ENCODE measurements at regions of chr9 and their contacts with region 1.

Region 1: GRCh38 chr9:2461892-2462291 is 159.7 kb upstream of the VLDLR start:
- DNase-seq: no peak
- H3K4me3 ChIP-seq: no peak overlapping the region
- H3K4me3 Mint-ChIP-seq: no peak overlapping the region
- H3K27ac Mint-ChIP-seq: no peak overlapping the region
- H3K4me1 ChIP-seq: peaks cover 13% of the 10 kb centered on the region
- H3K4me1 Mint-ChIP-seq: peaks cover 4% of the 10 kb centered on the region
- H3K27me3 ChIP-seq: no peaks in the 10 kb centered on the region
- H3K27me3 Mint-ChIP-seq: no peaks in the 10 kb centered on the region
- CTCF ChIP-seq: no peak

Region 2: DNA sequence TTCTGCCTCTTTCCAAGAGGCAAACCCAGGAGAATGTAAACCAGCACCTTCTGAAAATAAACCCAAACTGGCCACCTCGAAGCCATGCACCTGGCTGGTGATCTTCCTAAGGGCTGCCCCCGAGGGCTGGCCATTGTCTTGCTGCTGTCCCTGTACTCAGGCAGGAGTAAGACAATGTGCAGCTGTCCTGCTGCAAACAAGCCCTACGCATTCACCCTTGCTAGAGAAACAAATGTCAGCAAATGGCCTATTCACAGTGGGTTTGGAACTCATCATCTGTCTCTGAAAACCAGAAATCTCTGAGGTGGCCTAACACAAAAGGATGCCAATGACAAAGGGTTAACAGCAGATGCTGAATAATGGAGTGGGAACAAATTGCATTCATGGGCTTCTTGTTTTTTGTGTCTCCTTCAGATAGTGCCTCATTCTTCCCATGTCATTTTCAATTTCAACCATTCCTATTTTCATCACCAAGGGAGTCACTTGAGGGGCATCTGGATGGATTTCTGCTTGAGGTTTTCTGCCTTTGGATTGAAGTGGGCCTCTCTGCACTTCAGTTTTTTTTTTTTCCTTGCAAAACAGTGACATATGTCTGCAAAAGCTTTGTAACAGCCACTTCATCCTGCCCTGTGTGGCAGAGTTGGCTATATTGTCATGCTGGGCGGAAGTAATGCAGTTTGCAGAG is 101.9 kb before region 1 on chr9:
- CTCF ChIA-PET with region 1: no interaction called
- POLR2A ChIA-PET with region 1: no interaction called
- intact Hi-C with region 1: no loop called
- DNase-seq: no peak
- H3K4me3 ChIP-seq: no peak overlapping the region
- H3K4me3 Mint-ChIP-seq: no peak overlapping the region
- H3K27ac Mint-ChIP-seq: no peak overlapping the region
- H3K4me1 ChIP-seq: no peaks in the 10 kb centered on the region
- H3K4me1 Mint-ChIP-seq: no peaks in the 10 kb centered on the region
- H3K27me3 ChIP-seq: no peaks in the 10 kb centered on the region
- H3K27me3 Mint-ChIP-seq: no peaks in the 10 kb centered on the region
- CTCF ChIP-seq: no peak

Region 3: DNA sequence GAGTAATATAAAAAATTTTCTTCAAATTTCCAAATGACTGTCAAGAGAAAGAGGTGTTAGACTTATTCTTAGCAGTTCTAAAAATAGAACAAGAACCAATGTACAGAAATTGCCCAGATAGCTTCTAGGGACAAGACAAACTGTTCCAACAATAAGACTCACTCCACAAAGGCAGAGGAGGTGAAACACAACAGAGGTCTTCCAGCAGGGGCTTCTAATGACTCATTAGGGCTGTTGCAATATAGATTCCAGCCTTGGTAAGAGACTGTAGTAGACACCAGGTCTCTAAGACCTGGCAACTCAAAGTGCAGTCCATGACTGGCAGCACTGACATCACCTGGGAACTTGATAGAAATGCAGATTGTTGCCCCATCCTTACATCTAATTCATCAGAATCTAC is 25.1 kb after region 1 on chr9:
- CTCF ChIA-PET with region 1: no interaction called
- POLR2A ChIA-PET with region 1: no interaction called
- intact Hi-C with region 1: no loop called
- DNase-seq: no peak
- H3K4me3 ChIP-seq: no peak overlapping the region
- H3K4me3 Mint-ChIP-seq: no peak overlapping the region
- H3K27ac Mint-ChIP-seq: no peak overlapping the region
- H3K4me1 ChIP-seq: 0 out of 2 replicates have a peak, but pooled peaks cover 6% of the 10 kb centered on the region
- H3K4me1 Mint-ChIP-seq: no peaks in the 10 kb centered on the region
- H3K27me3 ChIP-seq: no peaks in the 10 kb centered on the region
- H3K27me3 Mint-ChIP-seq: no peaks in the 10 kb centered on the region
- CTCF ChIP-seq: no peak

Region 4: GRCh38 chr9:3099646-3100045 is 637.8 kb after region 1 on chr9:
- CTCF ChIA-PET with region 1: no interaction called
- POLR2A ChIA-PET with region 1: no interaction called
- intact Hi-C with region 1: no loop called
- DNase-seq: no peak
- H3K4me3 ChIP-seq: no peak overlapping the region
- H3K4me3 Mint-ChIP-seq: no peak overlapping the region
- H3K27ac Mint-ChIP-seq: no peak overlapping the region
- H3K4me1 ChIP-seq: no peaks in the 10 kb centered on the region
- H3K4me1 Mint-ChIP-seq: no peaks in the 10 kb centered on the region
- H3K27me3 ChIP-seq: no peaks in the 10 kb centered on the region
- H3K27me3 Mint-ChIP-seq: peaks cover 3% of the 10 kb centered on the region
- CTCF ChIP-seq: no peak

Region 5: DNA sequence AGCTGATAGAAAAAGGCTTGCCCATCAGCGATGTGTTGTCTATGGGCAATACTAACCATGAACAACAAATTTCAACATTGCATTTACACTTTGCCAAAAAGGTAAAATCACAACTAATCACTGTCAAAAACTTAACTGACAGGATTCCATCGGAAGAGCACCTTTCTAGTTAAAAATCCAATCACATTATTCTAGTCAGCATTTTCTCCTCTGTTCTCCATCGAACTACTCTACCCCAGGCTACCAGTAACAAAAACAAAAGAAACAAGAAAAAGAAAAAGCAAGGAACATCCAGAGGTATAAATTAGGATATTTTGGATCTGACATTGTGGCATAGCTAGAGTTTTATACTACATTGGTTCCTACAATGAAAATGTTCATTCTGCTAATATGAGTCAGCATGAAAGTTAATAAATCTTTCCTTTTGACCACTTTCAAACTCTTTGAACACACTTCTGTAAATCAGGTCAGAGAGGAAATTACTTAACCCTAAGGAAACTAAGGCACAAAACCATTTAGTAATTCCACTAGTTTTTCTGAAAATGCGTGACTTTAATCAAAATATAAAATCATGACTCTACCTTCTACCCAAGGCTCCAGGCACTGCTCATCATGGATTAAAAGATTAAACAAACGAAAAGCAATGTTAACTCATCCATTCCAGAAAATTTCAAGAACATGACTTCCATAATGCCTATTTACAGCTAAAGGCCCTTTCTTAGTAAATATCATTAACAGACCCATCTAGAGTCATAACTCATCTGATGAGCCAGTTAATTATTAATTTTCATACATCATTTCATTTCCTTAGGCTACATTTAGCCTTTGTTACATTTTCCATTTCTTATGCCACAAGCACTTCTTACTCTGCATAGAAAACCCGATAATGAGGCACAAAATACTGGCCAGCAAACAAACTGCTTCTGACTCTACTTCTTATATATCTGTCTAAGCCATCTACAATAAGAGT is 1827.8 kb after region 1 on chr9:
- CTCF ChIA-PET with region 1: no interaction called
- POLR2A ChIA-PET with region 1: no interaction called
- intact Hi-C with region 1: loop called (anchors 5 kb)
- DNase-seq: no peak
- H3K4me3 ChIP-seq: no peak overlapping the region
- H3K4me3 Mint-ChIP-seq: no peak overlapping the region
- H3K27ac Mint-ChIP-seq: no peak overlapping the region
- H3K4me1 ChIP-seq: peaks cover 29% of the 10 kb centered on the region
- H3K4me1 Mint-ChIP-seq: no peaks in the 10 kb centered on the region
- H3K27me3 ChIP-seq: no peaks in the 10 kb centered on the region
- H3K27me3 Mint-ChIP-seq: no peaks in the 10 kb centered on the region
- CTCF ChIP-seq: no peak